ENCODE measurements at regions of chr12 and their contacts with region 1.

Region 1: DNA sequence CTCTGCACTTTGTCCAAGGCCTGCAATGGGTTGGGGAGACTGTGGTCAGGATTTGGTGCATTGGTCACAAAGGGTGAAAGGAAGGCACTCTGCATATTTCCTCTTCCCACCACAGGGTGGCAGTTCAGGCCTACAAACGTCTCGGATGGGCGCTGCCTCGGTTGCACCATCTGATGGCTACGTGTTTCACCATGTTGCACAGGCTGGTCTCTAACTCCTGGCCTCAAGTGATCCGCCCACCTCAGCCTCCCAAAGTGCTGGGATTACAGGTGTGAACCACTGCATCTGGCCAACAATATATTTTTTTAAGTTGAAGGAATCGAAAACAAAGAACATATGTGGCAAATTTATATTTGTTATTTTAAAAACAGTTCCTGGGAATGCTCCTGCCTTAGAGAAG is 35.1 kb downstream of the TMBIM6 start:
- DNase-seq: peak; percentile 51 to 59
- ATAC-seq: peak; percentile 73 to 94 (median 88)
- H3K4me3 ChIP-seq: no peak overlapping the region
- H3K27ac ChIP-seq: no peak overlapping the region
- H3K4me1 ChIP-seq: peaks cover 0 to 10% (median 5%) of the 10 kb centered on the region in 9 donors
- H3K27me3 ChIP-seq: no peaks in the 10 kb centered on the region
- CTCF ChIP-seq: peak; percentile 60 to 86 (median 80)

Region 2: GRCh38 chr12:49720214-49720613 is 56.2 kb before region 1 on chr12:
- intact Hi-C with region 1: loop called in 1 of 10 experiments (anchors 10 kb)
- DNase-seq: no peak
- ATAC-seq: no peak
- H3K4me3 ChIP-seq: no peak overlapping the region
- H3K27ac ChIP-seq: no peak overlapping the region
- H3K4me1 ChIP-seq: no peaks in the 10 kb centered on the region
- H3K27me3 ChIP-seq: peaks cover 0 to 19% (median 7%) of the 10 kb centered on the region in 7 donors
- CTCF ChIP-seq: peak in 1 of 9 donors; percentile 9

Region 3: GRCh38 chr12:49842519-49843352 is 66.3 kb after region 1 on chr12 and contains the start of gene BCDIN3D:
- intact Hi-C with region 1: loop called (anchors 1 to 5 kb)
- DNase-seq: peak; percentile 90 to 92
- ATAC-seq: peak; percentile 97 to 99 (median 98)
- H3K4me3 ChIP-seq: peak within 1 kb of the TSS; percentile 60 to 86 (median 72)
- H3K27ac ChIP-seq: peak within 1 kb of the TSS; percentile 62 to 95 (median 90)
- H3K4me1 ChIP-seq: peaks cover 3 to 24% (median 16%) of the 10 kb centered on the region in 9 donors
- H3K27me3 ChIP-seq: peaks cover 0 to 14% (median 0%) of the 10 kb centered on the region in 7 donors
- CTCF ChIP-seq: no peak
- total RNA-seq, gene BCDIN3D: 1.1 to 3.9 (median 2.4) TPM

Region 4: GRCh38 chr12:49967042-49967776 is 190.8 kb after region 1 on chr12:
- intact Hi-C with region 1: loop called in 2 of 10 experiments (anchors 10 kb)
- DNase-seq: peak; percentile 88 to 93
- ATAC-seq: peak; percentile 72 to 90 (median 84)
- H3K4me3 ChIP-seq: peak overlapping the region in 9 of 10 donors; percentile 26 to 50 (median 42)
- H3K27ac ChIP-seq: no peak overlapping the region
- H3K4me1 ChIP-seq: peaks cover 5 to 26% (median 9%) of the 10 kb centered on the region in 9 donors
- H3K27me3 ChIP-seq: peaks cover 0 to 69% (median 27%) of the 10 kb centered on the region in 7 donors
- CTCF ChIP-seq: peak; percentile 68 to 90 (median 78)

Region 5: DNA sequence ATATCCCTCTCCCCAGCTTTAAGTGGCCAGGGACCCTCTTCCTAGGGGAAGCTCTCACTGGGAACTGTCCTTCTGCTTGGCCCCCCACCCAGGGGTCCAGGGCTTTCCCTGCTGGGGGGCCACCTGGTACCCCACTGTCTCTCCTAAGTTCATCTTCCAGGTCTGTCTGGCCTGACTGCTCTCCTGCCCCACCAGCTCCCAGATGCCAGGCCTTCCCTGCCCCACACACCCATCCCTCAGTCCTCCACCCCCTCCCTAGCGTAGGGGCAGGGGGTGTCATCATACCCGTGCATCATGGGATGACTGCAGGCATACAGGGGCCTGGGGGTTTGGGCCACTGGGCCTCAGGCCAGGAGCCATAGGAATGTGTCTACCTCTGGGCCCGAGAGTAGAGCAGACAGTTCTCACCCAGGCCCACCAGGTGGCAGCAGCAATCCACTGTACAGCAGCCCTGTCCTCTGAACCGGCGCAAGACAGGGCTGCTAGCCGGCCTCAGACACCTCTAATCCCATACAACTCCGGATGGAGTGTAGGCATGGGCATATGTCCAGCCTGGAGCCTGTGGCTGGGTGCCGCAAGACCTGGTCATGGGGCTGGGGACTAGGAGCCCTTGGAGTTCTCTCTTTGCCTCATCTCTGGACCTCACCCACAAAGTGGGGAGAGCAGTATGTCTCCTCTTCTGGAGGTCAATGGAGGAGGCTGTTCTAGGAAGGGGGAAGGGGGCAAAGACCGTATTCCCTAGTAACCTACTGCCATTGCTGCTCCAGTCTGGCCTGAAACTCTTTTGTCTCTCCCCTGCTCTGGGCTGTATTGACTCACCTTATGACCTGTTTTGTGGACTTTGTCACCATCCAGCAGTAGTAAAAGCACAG is 298.8 kb after region 1 on chr12:
- intact Hi-C with region 1: loop called in 1 of 10 experiments (anchors 5 kb)
- DNase-seq: peak; percentile 84 to 85
- ATAC-seq: peak; percentile 84 to 92 (median 88)
- H3K4me3 ChIP-seq: no peak overlapping the region
- H3K27ac ChIP-seq: no peak overlapping the region
- H3K4me1 ChIP-seq: peaks cover 3 to 13% (median 6%) of the 10 kb centered on the region in 9 donors
- H3K27me3 ChIP-seq: no peaks in the 10 kb centered on the region
- CTCF ChIP-seq: peak; percentile 76 to 97 (median 94)

Measured in heart right ventricle (tissue), 16 donors.